Head of caudate nucleus (tissue), 42 donors: ENCODE measurements at regions of chr22 and their contacts with region 1.

Region 1: DNA sequence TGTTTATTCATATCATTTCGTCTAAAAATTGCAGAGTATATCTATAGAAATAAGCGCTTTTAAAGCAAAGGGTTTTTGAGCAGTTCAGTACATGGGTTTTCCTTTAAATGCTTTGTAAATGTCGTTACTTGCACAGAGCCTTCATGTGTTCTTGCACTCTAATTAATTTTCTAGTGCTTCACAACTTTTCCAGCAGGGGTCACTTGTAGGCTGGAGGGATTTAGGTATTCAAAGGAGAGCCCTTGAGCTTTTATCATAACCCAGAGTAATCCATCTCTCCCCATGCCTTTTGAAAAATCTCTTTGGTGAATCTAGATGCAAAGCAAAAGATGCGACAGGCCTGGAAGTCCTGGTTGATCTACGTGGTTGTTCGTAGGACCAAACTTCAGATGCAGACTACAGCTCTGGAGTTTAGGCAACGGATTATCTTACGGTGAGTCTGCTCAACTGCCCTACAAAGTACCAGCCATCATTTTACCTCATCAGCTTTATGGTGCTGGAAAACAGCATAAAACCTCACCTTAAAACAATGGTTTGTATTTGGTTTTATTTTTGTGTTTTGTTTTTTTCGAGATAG is 60.4 kb downstream of the SFI1 start:
- DNase-seq: peak in 16 of 42 donors; percentile 5 to 64 (median 30)

Region 2: GRCh38 chr22:31630331-31631329 is 73.9 kb after region 1 on chr22:
- intact Hi-C with region 1: loop called (anchors 5 kb)
- DNase-seq: peak; percentile 54 to 90 (median 80)